CD8-positive, alpha-beta T cell (primary cell): ENCODE measurements at regions of chr15 and their contacts with region 1.

Region 1: GRCh38 chr15:93819826-93820225 is 411.5 kb upstream of the MCTP2 start:
- DNase-seq: no peak
- ATAC-seq: no peak
- H3K4me3 ChIP-seq: no peak overlapping the region
- H3K4me3 Mint-ChIP-seq: no peak overlapping the region
- H3K27ac ChIP-seq: no peak overlapping the region
- H3K27ac Mint-ChIP-seq: no peak overlapping the region
- H3K4me1 ChIP-seq: no peaks in the 10 kb centered on the region
- H3K4me1 Mint-ChIP-seq: no peaks in the 10 kb centered on the region
- H3K27me3 ChIP-seq: no peaks in the 10 kb centered on the region
- H3K27me3 Mint-ChIP-seq: no peaks in the 10 kb centered on the region
- CTCF ChIP-seq: no peak

Region 2: GRCh38 chr15:93759629-93760028 is 60.2 kb before region 1 on chr15:
- CTCF ChIA-PET with region 1: no interaction called
- POLR2A ChIA-PET with region 1: no interaction called
- intact Hi-C with region 1: loop called in 1 of 2 experiments (anchors 10 kb)
- DNase-seq: no peak
- ATAC-seq: no peak
- H3K4me3 ChIP-seq: no peak overlapping the region
- H3K4me3 Mint-ChIP-seq: no peak overlapping the region
- H3K27ac ChIP-seq: no peak overlapping the region
- H3K27ac Mint-ChIP-seq: no peak overlapping the region
- H3K4me1 ChIP-seq: no peaks in the 10 kb centered on the region
- H3K4me1 Mint-ChIP-seq: no peaks in the 10 kb centered on the region
- H3K27me3 ChIP-seq: no peaks in the 10 kb centered on the region
- H3K27me3 Mint-ChIP-seq: no peaks in the 10 kb centered on the region
- CTCF ChIP-seq: no peak